Activated naive CD8-positive, alpha-beta T cell treated with anti-CD3 and anti-CD28 coated beads, Interleukin-2, amount 10 ng/mL, durations not matched to agents 7 days and 5 days (primary cell): ENCODE measurements at regions of chr1 and their contacts with region 1.

Region 1: DNA sequence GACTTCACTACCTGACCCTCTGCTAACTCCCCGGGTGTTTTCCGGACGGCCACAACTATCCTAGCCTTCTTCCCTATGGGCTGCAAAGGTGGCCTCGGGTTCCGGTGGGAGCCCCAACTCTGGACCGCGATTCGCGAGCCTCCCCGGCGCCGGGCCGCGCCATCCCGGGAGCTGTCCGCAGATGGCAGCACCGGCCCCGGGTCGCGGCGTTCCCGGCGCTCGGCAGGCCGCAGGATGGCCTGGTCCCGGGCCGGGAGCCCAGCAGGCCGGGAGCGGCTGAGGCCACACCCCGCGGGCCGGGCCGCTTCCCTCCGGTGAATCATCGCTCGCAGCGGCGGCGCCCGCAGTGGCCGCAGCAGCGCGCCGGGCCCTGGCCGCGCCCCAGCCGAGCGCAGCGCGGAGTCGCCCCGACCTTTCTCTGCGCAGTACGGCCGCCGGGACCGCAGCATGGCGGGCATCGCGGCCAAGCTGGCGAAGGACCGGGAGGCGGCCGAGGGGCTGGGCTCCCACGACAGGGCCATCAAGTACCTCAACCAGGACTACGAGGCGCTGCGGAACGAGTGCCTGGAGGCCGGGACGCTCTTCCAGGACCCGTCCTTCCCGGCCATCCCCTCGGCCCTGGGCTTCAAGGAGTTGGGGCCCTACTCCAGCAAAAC is at the start of gene CAPN2:
- DNase-seq: peak; percentile 81
- ATAC-seq: peak; percentile 57
- H3K4me3 Mint-ChIP-seq: peak within 1 kb of the TSS; percentile 85
- H3K27ac Mint-ChIP-seq: peak within 1 kb of the TSS; percentile 89
- H3K4me1 Mint-ChIP-seq: peaks cover 49% of the 10 kb centered on the region
- H3K27me3 Mint-ChIP-seq: peaks cover 3% of the 10 kb centered on the region
- total RNA-seq, gene CAPN2: 169 to 177 TPM

Region 2: GRCh38 chr1:223726380-223727001 is 14.2 kb after region 1 on chr1:
- POLR2A ChIA-PET with region 1: interaction called, 29 read pairs
- DNase-seq: peak; percentile 70
- ATAC-seq: peak; percentile 100
- H3K4me3 Mint-ChIP-seq: peak overlapping the region; percentile 81
- H3K27ac Mint-ChIP-seq: peak overlapping the region; percentile 93
- H3K4me1 Mint-ChIP-seq: peaks cover 44% of the 10 kb centered on the region
- H3K27me3 Mint-ChIP-seq: no peaks in the 10 kb centered on the region

Region 3: DNA sequence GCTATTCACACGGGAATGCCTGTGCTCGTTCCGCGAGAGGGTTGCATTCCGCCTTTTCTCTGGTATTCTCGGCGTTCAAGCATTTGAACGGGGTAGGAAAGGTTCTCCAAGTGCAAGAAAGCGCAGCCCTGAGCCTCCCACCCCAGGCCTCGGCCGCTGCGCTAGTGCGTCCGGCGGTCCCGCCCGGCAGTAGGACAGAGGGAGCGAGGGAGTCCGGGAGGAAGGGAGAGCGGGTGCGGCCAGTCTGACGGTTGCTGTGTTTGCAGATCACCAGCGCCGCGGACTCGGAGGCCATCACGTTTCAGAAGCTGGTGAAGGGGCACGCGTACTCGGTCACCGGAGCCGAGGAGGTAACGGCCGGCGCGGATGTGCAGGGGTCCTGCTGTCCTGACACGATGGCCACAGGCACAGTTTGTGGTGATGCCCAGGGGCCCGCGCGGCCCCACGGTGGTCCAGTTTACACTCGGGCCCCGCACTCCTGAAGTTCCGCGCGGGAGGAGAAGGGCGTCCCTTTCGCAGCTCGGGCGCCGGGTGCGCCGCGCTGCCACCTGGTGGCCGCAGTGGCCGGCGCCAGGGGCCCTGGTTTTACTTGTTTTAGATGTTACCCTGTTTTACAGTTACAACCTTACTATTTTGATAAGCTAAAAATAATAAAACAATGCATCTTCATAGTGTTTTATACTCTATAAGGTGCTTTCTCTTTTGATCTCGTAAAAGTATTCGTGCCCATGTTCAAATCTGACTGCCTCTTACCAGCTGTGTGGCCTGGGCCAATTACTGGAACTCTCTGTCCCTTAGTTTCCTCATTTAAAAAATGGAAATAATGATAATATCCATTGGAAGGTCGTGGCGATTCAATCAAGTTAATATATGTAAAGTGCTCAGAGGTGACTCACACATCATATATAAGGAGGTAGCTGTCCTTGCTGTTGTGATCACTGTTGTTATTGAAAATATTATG is 36.7 kb after region 1 on chr1:
- POLR2A ChIA-PET with region 1: interaction called, 15 read pairs
- DNase-seq: peak; percentile 83
- ATAC-seq: peak; percentile 81
- H3K4me3 Mint-ChIP-seq: peak overlapping the region; percentile 68
- H3K27ac Mint-ChIP-seq: peak overlapping the region; percentile 27
- H3K4me1 Mint-ChIP-seq: peaks cover 4% of the 10 kb centered on the region
- H3K27me3 Mint-ChIP-seq: no peaks in the 10 kb centered on the region

Region 4: DNA sequence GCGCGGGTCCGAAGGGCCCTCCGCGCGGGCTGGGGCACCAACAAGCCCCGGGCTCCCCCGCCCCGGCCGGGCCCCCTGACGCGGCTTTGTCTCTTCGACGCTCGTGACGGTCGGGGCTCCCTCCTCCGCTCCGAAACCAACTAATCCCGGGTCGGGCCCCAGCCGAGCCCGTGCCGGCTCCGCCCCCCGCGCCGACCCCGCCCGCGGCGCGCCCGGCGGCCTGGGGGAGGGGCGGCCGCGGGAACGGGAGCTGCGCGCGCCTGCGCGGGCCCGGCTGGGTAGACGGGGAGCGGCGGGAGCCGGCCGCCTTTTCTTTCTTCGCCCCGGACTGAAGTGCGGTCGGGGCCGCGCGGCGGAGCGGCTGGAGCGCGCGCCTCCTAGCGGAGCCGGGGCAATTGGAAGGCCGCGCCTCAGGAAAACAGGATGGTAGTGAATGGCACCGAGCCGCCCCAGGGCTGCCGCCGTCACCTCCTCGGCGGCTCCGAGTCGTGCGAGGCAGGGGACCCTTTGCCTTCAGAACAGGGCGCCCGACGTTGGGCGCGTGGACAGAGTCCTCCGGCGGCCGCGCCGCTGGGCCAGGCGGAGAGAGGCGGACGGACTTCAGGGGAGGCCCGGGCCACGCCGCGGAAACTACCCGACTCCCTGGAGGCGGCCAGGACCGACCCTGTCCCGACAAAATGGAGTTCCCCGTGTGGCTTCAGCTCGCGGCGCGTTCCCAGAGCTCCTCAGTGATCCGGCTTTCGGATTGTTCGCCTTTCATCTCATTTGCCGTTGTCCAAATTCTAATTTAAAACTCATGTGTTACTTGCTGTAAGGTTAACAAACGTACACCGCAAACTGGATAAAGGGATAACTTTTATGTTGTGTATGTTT is 133.7 kb after region 1 on chr1 and contains the start of gene TP53BP2:
- POLR2A ChIA-PET with region 1: interaction called, 13 read pairs
- DNase-seq: peak; percentile 94
- ATAC-seq: peak; percentile 81
- H3K4me3 Mint-ChIP-seq: peak within 1 kb of the TSS; percentile 98
- H3K27ac Mint-ChIP-seq: peak within 1 kb of the TSS; percentile 96
- H3K4me1 Mint-ChIP-seq: peaks cover 26% of the 10 kb centered on the region
- H3K27me3 Mint-ChIP-seq: no peaks in the 10 kb centered on the region
- total RNA-seq, gene TP53BP2: 35.4 to 37.2 TPM

Region 5: GRCh38 chr1:224067621-224068457 is 355.5 kb after region 1 on chr1:
- POLR2A ChIA-PET with region 1: no interaction called
- DNase-seq: no peak
- ATAC-seq: peak; percentile 56
- H3K4me3 Mint-ChIP-seq: no peak overlapping the region
- H3K27ac Mint-ChIP-seq: no peak overlapping the region
- H3K4me1 Mint-ChIP-seq: peaks cover 12% of the 10 kb centered on the region
- H3K27me3 Mint-ChIP-seq: peaks cover 17% of the 10 kb centered on the region